ENCODE measurements at regions of chr4 and their contacts with region 1.

Region 1: DNA sequence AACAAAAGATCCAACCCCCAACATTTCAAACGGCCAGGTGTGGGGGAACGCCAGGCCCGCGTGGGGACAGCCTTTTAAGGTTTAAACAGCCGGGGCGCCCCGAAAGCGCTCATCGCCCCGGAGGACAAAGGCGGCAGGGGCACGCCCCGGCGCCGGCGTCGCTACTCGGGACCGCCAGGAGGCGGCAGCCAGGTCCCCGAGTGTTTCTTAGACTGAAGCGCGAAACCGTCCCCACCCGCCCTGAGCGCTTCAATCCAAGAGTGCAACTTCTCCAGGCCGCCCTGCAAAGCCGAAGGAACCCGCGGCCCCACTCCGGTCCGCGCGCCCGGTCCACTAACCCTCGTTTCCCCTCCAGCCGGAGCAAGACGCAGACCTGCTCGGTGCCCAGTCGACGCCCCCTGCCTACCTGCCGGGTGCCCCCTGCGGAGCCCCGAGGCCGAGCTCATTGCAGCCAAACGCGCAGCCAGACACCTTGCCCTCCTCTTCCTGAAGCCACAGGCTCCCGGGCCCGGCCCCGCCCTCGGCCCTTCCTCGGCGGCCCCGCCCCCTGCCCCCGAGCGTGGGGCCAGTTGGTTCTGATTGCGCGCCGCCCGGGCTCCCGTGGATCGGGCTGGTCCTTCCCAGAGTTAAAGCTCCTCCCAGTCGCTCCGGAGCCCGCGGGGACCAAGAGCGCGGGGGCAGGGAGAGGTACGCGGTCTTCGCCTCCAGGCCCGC is at the start of gene CASP6:
- DNase-seq: peak; percentile 51
- ATAC-seq: peak; percentile 87
- H3K4me3 ChIP-seq: peak within 1 kb of the TSS; percentile 71 to 72
- H3K27ac ChIP-seq: peak within 1 kb of the TSS; percentile 74
- H3K4me1 ChIP-seq: peaks cover 13 to 21% of the 10 kb centered on the region in 2 experiments; a peak in 3 of 4 replicates
- H3K27me3 ChIP-seq: no peaks in the 10 kb centered on the region
- CTCF ChIP-seq: peak; percentile 37 to 64 (median 54); a peak in 5 of 6 replicates
- POLR2A ChIP-seq: no peak
- RAD21 ChIP-seq: peak; percentile 46
- total RNA-seq, gene CASP6: 18.1 TPM

Region 2: DNA sequence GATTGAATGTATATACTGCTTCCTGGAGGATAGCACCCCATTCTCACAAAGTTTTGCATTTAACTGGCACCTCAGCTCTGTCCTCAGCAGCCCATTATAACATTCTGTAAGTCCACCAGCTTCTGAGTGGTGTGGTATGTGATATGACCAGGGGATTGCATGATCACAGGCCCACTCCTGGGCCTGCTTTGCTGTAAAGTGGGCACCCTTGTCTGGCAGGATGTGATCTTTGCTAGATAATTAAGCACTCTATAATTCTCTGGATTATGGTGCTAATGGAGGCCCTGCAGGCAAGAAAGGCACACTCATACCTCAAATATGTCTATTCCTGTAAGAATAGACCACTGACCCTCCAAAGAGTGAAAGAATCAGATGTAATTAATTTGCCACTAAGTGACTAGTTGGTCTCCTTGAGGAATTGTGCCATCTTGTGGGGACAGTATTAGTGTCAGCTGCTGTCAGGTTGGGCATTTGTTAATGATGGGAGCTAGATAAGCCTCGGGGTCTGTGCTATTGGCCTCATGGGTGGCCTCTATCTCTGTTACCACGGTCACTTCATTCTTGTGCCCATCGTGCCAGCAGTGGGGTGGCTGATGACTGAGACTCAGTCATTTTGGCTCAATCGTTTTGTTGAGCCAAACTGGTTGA is 100.9 kb after region 1 on chr4:
- CTCF ChIA-PET with region 1: interaction called, 10 read pairs
- POLR2A ChIA-PET with region 1: no interaction called
- RAD21 ChIA-PET with region 1: no interaction called
- intact Hi-C with region 1: loop called (anchors 5 kb)
- DNase-seq: peak; percentile 51
- ATAC-seq: peak; percentile 94
- H3K4me3 ChIP-seq: no peak overlapping the region
- H3K27ac ChIP-seq: no peak overlapping the region
- H3K4me1 ChIP-seq: peaks cover 0 to 5% of the 10 kb centered on the region in 2 experiments; a peak in 1 of 4 replicates
- H3K27me3 ChIP-seq: no peaks in the 10 kb centered on the region
- CTCF ChIP-seq: peak; percentile 56 to 71 (median 62); a peak in 5 of 6 replicates
- POLR2A ChIP-seq: no peak
- RAD21 ChIP-seq: peak; percentile 85

Region 3: DNA sequence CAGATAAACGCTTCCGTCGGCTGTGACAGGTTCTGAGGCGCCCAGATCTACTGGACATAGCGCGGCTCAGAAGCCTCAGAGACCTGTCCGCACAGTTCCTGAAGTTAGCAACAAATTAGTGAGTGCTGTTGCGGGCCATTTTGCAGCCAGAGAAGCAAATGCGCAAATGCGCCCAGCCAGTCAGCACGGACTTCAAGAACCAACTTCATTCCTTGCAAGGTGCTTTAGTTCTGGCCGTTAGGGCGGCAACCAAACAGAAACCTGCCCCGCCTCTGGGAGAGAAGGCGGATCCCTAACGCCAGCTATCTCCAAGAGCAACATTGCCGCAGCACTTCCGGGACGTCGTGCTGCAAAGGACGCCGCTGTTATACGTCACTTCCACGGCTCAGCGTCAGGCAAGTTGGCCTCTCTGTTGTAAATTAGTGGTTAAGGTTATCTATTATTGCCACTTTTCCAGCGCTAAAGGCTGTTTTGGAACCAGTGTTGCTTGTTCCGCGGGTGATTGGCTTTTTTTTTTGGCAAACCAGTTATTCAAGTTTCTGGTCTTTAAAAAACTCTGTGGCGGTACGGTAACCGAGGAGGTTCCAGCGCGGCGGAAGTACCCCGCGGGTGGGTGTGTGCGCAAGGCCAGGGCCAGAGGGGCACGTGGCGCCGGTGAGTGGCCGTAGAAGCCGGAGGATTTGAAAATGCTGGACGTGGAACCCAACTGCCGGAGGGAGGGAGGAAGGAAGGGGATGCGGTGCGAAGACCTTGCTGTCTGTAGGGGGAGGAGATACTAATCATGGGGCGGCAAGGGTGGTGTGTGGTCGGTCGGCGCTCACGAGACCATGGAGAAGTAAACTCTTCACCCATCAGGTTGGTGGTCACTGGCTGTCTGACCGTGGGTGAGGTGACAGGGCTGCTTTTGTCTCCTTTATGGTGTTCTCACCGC is 112.3 kb after region 1 on chr4 and contains the start of gene GAR1:
- CTCF ChIA-PET with region 1: no interaction called
- POLR2A ChIA-PET with region 1: interaction called, 4 read pairs
- RAD21 ChIA-PET with region 1: no interaction called
- intact Hi-C with region 1: loop called (anchors 5 kb)
- DNase-seq: peak; percentile 93
- ATAC-seq: peak; percentile 96
- H3K4me3 ChIP-seq: peak within 1 kb of the TSS; percentile 81 to 98
- H3K27ac ChIP-seq: peak within 1 kb of the TSS; percentile 69
- H3K4me1 ChIP-seq: peaks cover 10 to 16% of the 10 kb centered on the region in 2 experiments; a peak in 3 of 4 replicates
- H3K27me3 ChIP-seq: no peaks in the 10 kb centered on the region
- CTCF ChIP-seq: no peak
- POLR2A ChIP-seq: peak; percentile 60
- RAD21 ChIP-seq: no peak
- total RNA-seq, gene GAR1: 40.6 TPM

Region 4: GRCh38 chr4:109977854-109978501 is 274.9 kb after region 1 on chr4:
- CTCF ChIA-PET with region 1: interaction called, 4 read pairs
- POLR2A ChIA-PET with region 1: no interaction called
- RAD21 ChIA-PET with region 1: no interaction called
- intact Hi-C with region 1: loop called (anchors 5 kb)
- DNase-seq: peak; percentile 27
- ATAC-seq: peak; percentile 68
- H3K4me3 ChIP-seq: no peak overlapping the region
- H3K27ac ChIP-seq: no peak overlapping the region
- H3K4me1 ChIP-seq: peaks cover 0 to 4% of the 10 kb centered on the region in 2 experiments; a peak in 1 of 4 replicates
- H3K27me3 ChIP-seq: no peaks in the 10 kb centered on the region
- CTCF ChIP-seq: peak; percentile 57 to 75 (median 58)
- POLR2A ChIP-seq: no peak
- RAD21 ChIP-seq: peak; percentile 80

Measured in HCT116 (cell line).